Activated CD8-positive, alpha-beta memory T cell treated with anti-CD3 and anti-CD28 coated beads, Interleukin-2, amount 10 ng/mL, durations not matched to agents 7 days and 5 days (primary cell): ENCODE measurements at regions of chr19 and their contacts with region 1.

Region 1: GRCh38 chr19:17075035-17075863 is at the starts of genes HAUS8 and MYO9B:
- DNase-seq: peak; percentile 100
- ATAC-seq: peak; percentile 84
- H3K4me3 Mint-ChIP-seq: peak within 1 kb of the TSS; percentile 100
- H3K27ac Mint-ChIP-seq: peak within 1 kb of the TSS; percentile 97
- H3K4me1 Mint-ChIP-seq: peaks cover 58% of the 10 kb centered on the region
- H3K27me3 Mint-ChIP-seq: no peaks in the 10 kb centered on the region
- total RNA-seq, gene HAUS8: 62.1 to 73.0 TPM
- total RNA-seq, gene MYO9B: 280 to 356 TPM

Region 2: GRCh38 chr19:17025991-17026658 is 49.1 kb before region 1 on chr19:
- CTCF ChIA-PET with region 1: no interaction called
- DNase-seq: no peak
- ATAC-seq: no peak
- H3K4me3 Mint-ChIP-seq: no peak overlapping the region
- H3K27ac Mint-ChIP-seq: no peak overlapping the region
- H3K4me1 Mint-ChIP-seq: no peaks in the 10 kb centered on the region
- H3K27me3 Mint-ChIP-seq: peaks cover 51% of the 10 kb centered on the region

Region 3: GRCh38 chr19:17125715-17126677 is 50.7 kb after region 1 on chr19:
- CTCF ChIA-PET with region 1: interaction called, 19 read pairs
- DNase-seq: peak; percentile 95
- ATAC-seq: peak; percentile 91
- H3K4me3 Mint-ChIP-seq: peak overlapping the region; percentile 78
- H3K27ac Mint-ChIP-seq: peak overlapping the region; percentile 99
- H3K4me1 Mint-ChIP-seq: peaks cover 76% of the 10 kb centered on the region
- H3K27me3 Mint-ChIP-seq: no peaks in the 10 kb centered on the region